Activated CD4-positive, alpha-beta memory T cell treated with anti-CD3 and anti-CD28 coated beads for 36 hours (primary cell): ENCODE measurements at regions of chr4 and their contacts with region 1.

Region 1: GRCh38 chr4:87058356-87059073 is 123.7 kb downstream of the AFF1 start:
- DNase-seq: peak; percentile 81
- H3K4me3 Mint-ChIP-seq: peak overlapping the region; percentile 17
- H3K27ac Mint-ChIP-seq: peak overlapping the region; percentile 78
- H3K4me1 Mint-ChIP-seq: peaks cover 70% of the 10 kb centered on the region
- H3K27me3 Mint-ChIP-seq: no peaks in the 10 kb centered on the region

Region 2: GRCh38 chr4:86243750-86244149 is 814.8 kb before region 1 on chr4:
- CTCF ChIA-PET with region 1: no interaction called
- POLR2A ChIA-PET with region 1: no interaction called
- intact Hi-C with region 1: no loop called
- DNase-seq: no peak
- H3K4me3 Mint-ChIP-seq: no peak overlapping the region
- H3K27ac Mint-ChIP-seq: no peak overlapping the region
- H3K4me1 Mint-ChIP-seq: no peaks in the 10 kb centered on the region
- H3K27me3 Mint-ChIP-seq: no peaks in the 10 kb centered on the region

Region 3: GRCh38 chr4:86757468-86757867 is 301.0 kb before region 1 on chr4:
- CTCF ChIA-PET with region 1: no interaction called
- POLR2A ChIA-PET with region 1: no interaction called
- intact Hi-C with region 1: no loop called
- DNase-seq: no peak
- H3K4me3 Mint-ChIP-seq: no peak overlapping the region
- H3K27ac Mint-ChIP-seq: no peak overlapping the region
- H3K4me1 Mint-ChIP-seq: no peaks in the 10 kb centered on the region
- H3K27me3 Mint-ChIP-seq: peaks cover 2% of the 10 kb centered on the region

Region 4: GRCh38 chr4:87073199-87074120 is 14.9 kb after region 1 on chr4:
- CTCF ChIA-PET with region 1: no interaction called
- POLR2A ChIA-PET with region 1: interaction called, 5 read pairs
- intact Hi-C with region 1: loop called (anchors 1 kb)
- DNase-seq: peak; percentile 80
- H3K4me3 Mint-ChIP-seq: peak overlapping the region; percentile 54
- H3K27ac Mint-ChIP-seq: peak overlapping the region; percentile 71
- H3K4me1 Mint-ChIP-seq: peaks cover 49% of the 10 kb centered on the region
- H3K27me3 Mint-ChIP-seq: no peaks in the 10 kb centered on the region

Region 5: GRCh38 chr4:87103691-87104187 is 45.2 kb after region 1 on chr4:
- CTCF ChIA-PET with region 1: no interaction called
- POLR2A ChIA-PET with region 1: interaction called, 4 read pairs
- intact Hi-C with region 1: loop called (anchors 1 kb)
- DNase-seq: no peak
- H3K4me3 Mint-ChIP-seq: peak overlapping the region; percentile 57
- H3K27ac Mint-ChIP-seq: peak overlapping the region; percentile 84
- H3K4me1 Mint-ChIP-seq: peaks cover 72% of the 10 kb centered on the region
- H3K27me3 Mint-ChIP-seq: no peaks in the 10 kb centered on the region

Region 6: GRCh38 chr4:87317543-87317942 is 259.0 kb after region 1 on chr4:
- CTCF ChIA-PET with region 1: no interaction called
- POLR2A ChIA-PET with region 1: no interaction called
- intact Hi-C with region 1: no loop called
- DNase-seq: no peak
- H3K4me3 Mint-ChIP-seq: no peak overlapping the region
- H3K27ac Mint-ChIP-seq: no peak overlapping the region
- H3K4me1 Mint-ChIP-seq: no peaks in the 10 kb centered on the region
- H3K27me3 Mint-ChIP-seq: no peaks in the 10 kb centered on the region